HepG2 (cell line): ENCODE measurements at regions of chr9 and their contacts with region 1.

Region 1: GRCh38 chr9:77456829-77457437 is 191.2 kb downstream of the GNA14 start:
- DNase-seq: peak; percentile 82
- ATAC-seq: peak; percentile 87
- H3K4me3 ChIP-seq: no peak overlapping the region
- H3K27ac ChIP-seq: no peak overlapping the region
- H3K4me1 ChIP-seq: no peaks in the 10 kb centered on the region
- H3K27me3 ChIP-seq: peaks cover 0 to 21% of the 10 kb centered on the region in 2 experiments; a peak in 2 of 5 replicates
- CTCF ChIP-seq: peak; percentile 82
- EP300 ChIP-seq: no peak
- POLR2A ChIP-seq: no peak
- RAD21 ChIP-seq: no peak

Region 2: GRCh38 chr9:77488439-77489126 is 31.6 kb after region 1 on chr9:
- CTCF ChIA-PET with region 1: no interaction called
- POLR2A ChIA-PET with region 1: no interaction called
- in situ Hi-C with region 1: no loop called
- intact Hi-C with region 1: loop called (anchors 1 kb)
- DNase-seq: no peak
- ATAC-seq: peak; percentile 55; the same call in 2 of the 3 replicates
- H3K4me3 ChIP-seq: no peak overlapping the region
- H3K27ac ChIP-seq: no peak overlapping the region
- H3K4me1 ChIP-seq: no peaks in the 10 kb centered on the region
- H3K27me3 ChIP-seq: no peaks in the 10 kb centered on the region; a peak in 1 of 5 replicates
- CTCF ChIP-seq: peak; percentile 36; the same call in 1 of the 2 replicates
- EP300 ChIP-seq: no peak
- POLR2A ChIP-seq: no peak
- RAD21 ChIP-seq: no peak

Region 3: GRCh38 chr9:77651203-77651602 is 194.3 kb after region 1 on chr9:
- CTCF ChIA-PET with region 1: interaction called, 4 read pairs
- POLR2A ChIA-PET with region 1: no interaction called
- in situ Hi-C with region 1: no loop called
- intact Hi-C with region 1: loop called (anchors 5 kb)
- DNase-seq: no peak
- ATAC-seq: no peak
- H3K4me3 ChIP-seq: no peak overlapping the region
- H3K27ac ChIP-seq: no peak overlapping the region
- H3K4me1 ChIP-seq: no peaks in the 10 kb centered on the region
- H3K27me3 ChIP-seq: peaks cover 0 to 21% of the 10 kb centered on the region in 2 experiments; a peak in 2 of 5 replicates
- CTCF ChIP-seq: 0 out of 2 replicates have a peak, but pooled peaks have one; percentile 12
- EP300 ChIP-seq: no peak
- POLR2A ChIP-seq: no peak
- RAD21 ChIP-seq: no peak

Region 4: GRCh38 chr9:77751341-77752091 is 294.6 kb after region 1 on chr9:
- CTCF ChIA-PET with region 1: interaction called, 9 read pairs
- POLR2A ChIA-PET with region 1: interaction called, 3 read pairs
- in situ Hi-C with region 1: loop called (anchors 10 kb)
- intact Hi-C with region 1: loop called (anchors 2 kb)
- DNase-seq: peak; percentile 35
- ATAC-seq: peak; percentile 79
- H3K4me3 ChIP-seq: no peak overlapping the region
- H3K27ac ChIP-seq: no peak overlapping the region
- H3K4me1 ChIP-seq: no peaks in the 10 kb centered on the region
- H3K27me3 ChIP-seq: no peaks in the 10 kb centered on the region
- CTCF ChIP-seq: peak; percentile 68
- EP300 ChIP-seq: no peak
- POLR2A ChIP-seq: no peak
- RAD21 ChIP-seq: 0 out of 2 replicates have a peak, but pooled peaks have one; percentile 27

Region 5: GRCh38 chr9:78121488-78121887 is 664.6 kb after region 1 on chr9:
- CTCF ChIA-PET with region 1: no interaction called
- POLR2A ChIA-PET with region 1: no interaction called
- in situ Hi-C with region 1: loop called (anchors 25 kb)
- intact Hi-C with region 1: loop called (anchors 5 kb)
- DNase-seq: peak; percentile 36
- ATAC-seq: no peak; the same call in 2 of the 3 replicates
- H3K4me3 ChIP-seq: no peak overlapping the region
- H3K27ac ChIP-seq: no peak overlapping the region
- H3K4me1 ChIP-seq: no peaks in the 10 kb centered on the region
- H3K27me3 ChIP-seq: 0 out of 5 replicates have a peak, but pooled peaks cover 0 to 2% of the 10 kb centered on the region in 2 experiments
- CTCF ChIP-seq: peak; percentile 52
- EP300 ChIP-seq: no peak
- POLR2A ChIP-seq: no peak
- RAD21 ChIP-seq: 0 out of 2 replicates have a peak, but pooled peaks have one; percentile 21